PC-9 (cell line): ENCODE measurements at regions of chr18 and their contacts with region 1.

Region 1: DNA sequence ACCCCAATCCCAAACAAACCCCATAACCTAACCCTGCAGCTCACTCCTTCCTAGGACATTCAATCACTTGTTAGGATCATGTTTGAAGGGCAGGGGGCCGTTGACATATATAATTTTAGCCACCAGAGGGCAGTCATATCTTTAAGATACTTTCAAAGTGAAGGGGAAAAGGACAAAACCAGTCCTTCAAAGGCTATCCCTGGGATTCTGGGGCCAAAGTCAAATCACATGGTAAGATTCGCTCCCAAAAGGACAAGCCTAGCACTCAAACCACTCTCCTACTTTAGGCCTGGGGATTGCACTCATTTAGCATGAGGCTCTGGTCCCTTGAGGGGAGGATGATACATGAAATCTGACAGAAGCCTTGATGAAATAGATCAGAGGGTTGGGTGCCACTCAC is 44.6 kb downstream of the HAUS1 start:
- DNase-seq: peak; percentile 34 to 66
- H3K4me3 ChIP-seq: no peak overlapping the region
- H3K27ac ChIP-seq: peak overlapping the region; percentile 61; the same call in 1 of the 2 replicates
- H3K4me1 ChIP-seq: peaks cover 48% of the 10 kb centered on the region
- H3K27me3 ChIP-seq: no peaks in the 10 kb centered on the region
- CTCF ChIP-seq: peak; percentile 87

Region 2: GRCh38 chr18:46518438-46518837 is 369.6 kb after region 1 on chr18:
- CTCF ChIA-PET with region 1: no interaction called
- POLR2A ChIA-PET with region 1: no interaction called
- intact Hi-C with region 1: loop called (anchors 5 kb)
- DNase-seq: peak in 1 of 2 experiments; percentile 27
- H3K4me3 ChIP-seq: no peak overlapping the region
- H3K27ac ChIP-seq: no peak overlapping the region
- H3K4me1 ChIP-seq: no peaks in the 10 kb centered on the region
- H3K27me3 ChIP-seq: peaks cover 82% of the 10 kb centered on the region
- CTCF ChIP-seq: peak; percentile 48; the same call in 1 of the 2 replicates